Spleen (tissue), 13 donors: ENCODE measurements at regions of chr2 and their contacts with region 1.

Region 1: GRCh38 chr2:178796079-178796677 is 11.0 kb downstream of the TTN start:
- DNase-seq: no peak
- H3K4me3 ChIP-seq: no peak overlapping the region
- H3K27ac ChIP-seq: no peak overlapping the region
- H3K4me1 ChIP-seq: no peaks in the 10 kb centered on the region
- H3K27me3 ChIP-seq: no peaks in the 10 kb centered on the region
- CTCF ChIP-seq: peak in 10 of 11 experiments; percentile 31 to 66 (median 50)
- POLR2A ChIP-seq: no peak

Region 2: DNA sequence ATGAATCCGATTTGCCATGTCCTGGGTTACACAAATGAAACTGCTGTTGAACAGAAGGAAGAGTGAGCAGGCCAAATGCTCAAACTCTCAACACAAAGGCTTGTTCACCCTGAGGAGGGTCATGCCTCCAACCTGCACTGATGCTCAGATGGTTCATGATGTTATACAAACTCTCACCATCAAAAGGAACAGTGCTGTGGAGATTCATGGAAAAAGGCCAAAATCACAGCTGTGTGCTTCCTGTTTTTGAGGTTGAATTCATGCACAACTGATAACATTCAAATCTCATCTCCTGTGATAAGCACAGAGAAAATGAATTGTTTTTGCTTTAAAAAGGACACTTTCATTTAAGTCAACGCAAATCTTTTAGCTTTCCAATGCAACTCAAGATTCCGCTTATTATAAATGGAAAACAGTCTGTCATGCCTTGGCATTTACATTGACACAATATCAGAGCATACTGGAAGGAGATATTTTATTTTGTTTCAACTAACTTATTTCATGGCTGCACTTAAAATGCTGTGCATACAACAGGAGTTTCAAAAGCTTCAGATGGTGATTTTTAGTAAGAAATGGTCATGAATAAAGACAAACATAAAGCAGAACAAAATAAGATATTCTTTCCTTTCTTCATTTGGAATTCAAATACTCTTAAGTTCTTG is 33.3 kb after region 1 on chr2:
- intact Hi-C with region 1: no loop called
- DNase-seq: no peak
- H3K4me3 ChIP-seq: no peak overlapping the region
- H3K27ac ChIP-seq: peak overlapping the region in 5 of 8 donors; percentile 14 to 63 (median 24)
- H3K4me1 ChIP-seq: peaks cover 0 to 18% (median 7%) of the 10 kb centered on the region in 6 donors
- H3K27me3 ChIP-seq: no peaks in the 10 kb centered on the region
- CTCF ChIP-seq: peak in 3 of 11 experiments; percentile 13 to 16 (median 15)
- POLR2A ChIP-seq: no peak

Region 3: GRCh38 chr2:178914259-178914849 is 118.2 kb after region 1 on chr2:
- intact Hi-C with region 1: loop called (anchors 5 kb)
- DNase-seq: peak; percentile 84
- H3K4me3 ChIP-seq: no peak overlapping the region
- H3K27ac ChIP-seq: no peak overlapping the region
- H3K4me1 ChIP-seq: peaks cover 0 to 22% (median 4%) of the 10 kb centered on the region in 6 donors
- H3K27me3 ChIP-seq: no peaks in the 10 kb centered on the region
- CTCF ChIP-seq: peak; percentile 34 to 83 (median 72)
- POLR2A ChIP-seq: no peak

Region 4: GRCh38 chr2:178933493-178933892 is 137.3 kb after region 1 on chr2:
- intact Hi-C with region 1: no loop called
- DNase-seq: no peak
- H3K4me3 ChIP-seq: no peak overlapping the region
- H3K27ac ChIP-seq: no peak overlapping the region
- H3K4me1 ChIP-seq: no peaks in the 10 kb centered on the region
- H3K27me3 ChIP-seq: no peaks in the 10 kb centered on the region
- CTCF ChIP-seq: no peak
- POLR2A ChIP-seq: no peak